ENCODE measurements at regions of chr2 and their contacts with region 1.

Region 1: GRCh38 chr2:112301171-112301584 is 25.8 kb downstream of the ZC3H6 start:
- DNase-seq: no peak

Region 2: DNA sequence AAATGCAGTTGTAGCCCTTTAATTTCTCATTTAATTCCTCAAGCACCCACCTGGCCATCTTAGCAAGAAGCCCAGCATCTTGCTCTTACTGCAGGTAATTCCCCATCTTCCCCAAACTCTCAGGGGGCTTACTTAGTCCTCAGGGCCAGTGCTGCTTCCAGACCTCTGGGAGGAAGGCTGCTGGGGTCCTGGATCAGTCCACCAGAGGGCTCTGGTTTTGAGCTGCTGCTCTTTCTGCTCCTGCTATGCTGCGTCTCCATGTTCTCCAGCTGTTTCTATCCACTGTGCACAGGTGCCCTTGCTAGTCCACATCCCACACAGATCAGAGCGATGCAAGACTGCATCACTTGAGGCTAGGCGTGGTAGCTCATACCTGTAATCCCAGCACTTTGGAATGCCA is 280.6 kb before region 1 on chr2:
- in situ Hi-C with region 1: no loop called
- DNase-seq: no peak

Region 3: DNA sequence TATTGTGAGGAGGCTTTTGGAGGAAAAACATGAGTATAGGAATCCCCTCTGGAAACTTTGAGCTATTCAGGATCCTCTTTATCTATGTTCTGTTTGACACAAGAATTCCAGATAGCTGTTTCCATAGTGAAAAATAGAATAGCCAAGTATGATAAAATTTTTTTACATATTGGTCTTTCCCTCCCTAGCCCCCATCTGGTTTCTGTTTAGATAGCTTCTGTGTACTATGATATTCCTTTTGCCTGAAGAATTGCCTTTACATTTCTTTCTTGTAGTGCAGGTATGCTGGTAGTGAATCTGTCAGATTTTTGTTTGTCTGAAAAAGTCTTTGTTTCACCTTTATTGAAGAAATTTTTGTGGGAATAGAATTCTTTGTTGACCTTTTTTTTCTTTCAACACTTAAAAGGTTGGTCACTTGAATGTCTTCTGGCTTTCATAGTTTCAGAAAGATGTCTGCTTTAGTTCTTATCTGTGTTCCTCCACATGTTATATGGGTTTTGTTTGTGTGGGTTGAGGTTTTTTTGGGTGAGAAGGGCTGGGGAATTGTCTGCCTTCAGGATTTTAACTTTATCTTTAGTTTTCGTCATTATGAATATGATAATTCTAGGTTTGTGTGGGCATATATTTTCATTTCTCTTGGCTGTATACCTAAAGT is 192.9 kb before region 1 on chr2:
- in situ Hi-C with region 1: no loop called
- DNase-seq: no peak

Region 4: GRCh38 chr2:112339986-112340385 is 38.8 kb after region 1 on chr2:
- in situ Hi-C with region 1: loop called (anchors 5 kb)
- DNase-seq: no peak

Region 5: DNA sequence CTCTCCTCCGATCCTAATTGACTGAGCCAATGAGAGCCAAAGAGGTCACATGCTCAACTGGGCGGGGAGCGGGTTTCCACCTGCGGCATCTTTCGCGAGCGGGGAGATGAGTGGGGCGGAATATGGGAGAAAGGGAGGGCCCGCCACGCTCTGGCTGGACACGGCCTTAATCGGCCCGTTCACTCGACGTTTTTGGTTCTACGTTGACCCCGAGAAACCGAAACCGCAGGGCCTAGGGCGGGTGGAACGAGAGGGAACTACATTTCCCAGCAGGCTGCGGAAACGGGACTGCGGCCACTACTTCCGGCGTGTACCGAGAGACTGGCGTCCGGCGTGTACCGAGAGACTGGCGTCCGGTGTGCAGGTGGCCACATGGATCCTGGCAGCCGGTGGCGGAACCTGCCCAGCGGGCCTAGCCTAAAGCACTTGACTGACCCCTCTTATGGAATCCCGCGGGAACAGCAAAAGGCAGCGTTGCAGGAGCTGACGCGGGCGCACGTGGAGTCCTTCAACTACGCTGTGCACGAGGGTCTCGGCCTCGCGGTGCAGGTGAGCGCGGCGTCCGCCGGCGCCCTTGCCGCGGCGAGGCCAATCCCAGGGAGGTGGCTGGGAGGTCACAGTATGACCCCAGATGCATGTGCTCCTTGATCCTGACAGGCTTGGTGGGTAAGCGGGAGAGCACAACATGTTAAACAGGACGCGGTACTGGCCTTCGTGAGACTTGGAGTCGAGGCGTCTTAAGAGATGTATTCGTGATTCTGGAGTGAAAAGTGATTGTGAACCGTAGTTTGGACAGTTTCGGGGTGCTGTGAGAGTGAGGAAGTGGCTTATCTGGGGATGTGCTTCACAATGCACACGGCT is 241.2 kb after region 1 on chr2 and contains the start of gene POLR1B:
- in situ Hi-C with region 1: no loop called
- DNase-seq: peak; percentile 92
- total RNA-seq, gene POLR1B: 19.3 and 20.9 TPM in 2 replicates